ENCODE measurements at regions of chr22 and their contacts with region 1.

Region 1: GRCh38 chr22:28252539-28252938 is 333.5 kb upstream of the PITPNB start:
- DNase-seq: no peak
- H3K4me3 Mint-ChIP-seq: no peak overlapping the region
- H3K27ac Mint-ChIP-seq: no peak overlapping the region
- H3K4me1 Mint-ChIP-seq: no peaks in the 10 kb centered on the region
- H3K27me3 Mint-ChIP-seq: peaks cover 27% of the 10 kb centered on the region
- CTCF ChIP-seq: no peak

Region 2: GRCh38 chr22:28237112-28237511 is 15.4 kb before region 1 on chr22:
- CTCF ChIA-PET with region 1: no interaction called
- POLR2A ChIA-PET with region 1: no interaction called
- intact Hi-C with region 1: no loop called
- DNase-seq: peak; percentile 3
- H3K4me3 Mint-ChIP-seq: no peak overlapping the region
- H3K27ac Mint-ChIP-seq: no peak overlapping the region
- H3K4me1 Mint-ChIP-seq: no peaks in the 10 kb centered on the region
- H3K27me3 Mint-ChIP-seq: peaks cover 68% of the 10 kb centered on the region
- CTCF ChIP-seq: no peak

Region 3: GRCh38 chr22:28344918-28345703 is 92.6 kb after region 1 on chr22:
- CTCF ChIA-PET with region 1: no interaction called
- POLR2A ChIA-PET with region 1: no interaction called
- intact Hi-C with region 1: no loop called
- DNase-seq: no peak
- H3K4me3 Mint-ChIP-seq: no peak overlapping the region
- H3K27ac Mint-ChIP-seq: no peak overlapping the region
- H3K4me1 Mint-ChIP-seq: no peaks in the 10 kb centered on the region
- H3K27me3 Mint-ChIP-seq: peaks cover 72% of the 10 kb centered on the region
- CTCF ChIP-seq: no peak

Region 4: DNA sequence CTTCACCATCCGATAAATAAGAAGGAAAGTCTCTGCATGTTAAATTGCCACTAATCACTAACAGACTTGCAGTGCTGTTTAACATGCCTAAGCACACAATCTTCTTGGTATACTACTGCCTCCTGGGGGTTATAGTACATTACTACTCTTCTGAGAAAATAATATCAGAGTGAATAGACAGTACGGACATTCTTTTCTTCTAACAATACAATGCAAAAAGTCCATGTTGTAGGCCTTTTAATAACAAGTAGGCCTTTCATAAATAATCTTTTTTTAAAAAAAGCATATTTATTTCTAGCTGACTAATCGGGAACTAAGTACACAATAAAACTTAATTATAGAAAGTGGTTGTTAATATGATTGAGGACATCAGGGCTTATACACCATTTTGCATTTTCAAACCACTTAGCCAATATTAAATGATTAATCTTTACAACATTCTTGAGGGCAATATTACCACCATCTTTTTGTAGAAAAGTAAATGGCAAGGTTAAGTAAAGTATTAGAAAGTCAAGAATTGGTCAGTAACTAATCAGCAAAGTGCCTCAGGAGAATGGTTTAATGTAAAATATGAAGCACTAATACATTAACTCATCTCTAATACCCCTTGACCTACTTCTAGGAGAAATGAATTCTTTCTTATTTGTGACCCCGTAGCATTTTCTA is 342.4 kb after region 1 on chr22:
- CTCF ChIA-PET with region 1: interaction called, 3 read pairs
- POLR2A ChIA-PET with region 1: no interaction called
- intact Hi-C with region 1: loop called (anchors 5 kb)
- DNase-seq: peak; percentile 68
- H3K4me3 Mint-ChIP-seq: no peak overlapping the region
- H3K27ac Mint-ChIP-seq: no peak overlapping the region
- H3K4me1 Mint-ChIP-seq: no peaks in the 10 kb centered on the region
- H3K27me3 Mint-ChIP-seq: peaks cover 48% of the 10 kb centered on the region
- CTCF ChIP-seq: peak; percentile 61

Measured in MCF 10A (cell line).